ENCODE measurements at regions of chr15 and their contacts with region 1.

Region 1: GRCh38 chr15:41904541-41905005 is 10.7 kb upstream of the SPTBN5 start:
- DNase-seq: peak; percentile 81
- ATAC-seq: peak; percentile 81
- H3K4me3 Mint-ChIP-seq: no peak overlapping the region
- H3K27ac Mint-ChIP-seq: peak overlapping the region; percentile 26
- H3K4me1 Mint-ChIP-seq: peaks cover 22% of the 10 kb centered on the region
- H3K27me3 Mint-ChIP-seq: no peaks in the 10 kb centered on the region

Region 2: GRCh38 chr15:41603941-41604911 is 300.3 kb before region 1 on chr15:
- CTCF ChIA-PET with region 1: interaction called, 11 read pairs
- POLR2A ChIA-PET with region 1: no interaction called
- DNase-seq: peak; percentile 66
- ATAC-seq: peak; percentile 88
- H3K4me3 Mint-ChIP-seq: peak overlapping the region; percentile 32
- H3K27ac Mint-ChIP-seq: no peak overlapping the region
- H3K4me1 Mint-ChIP-seq: peaks cover 9% of the 10 kb centered on the region
- H3K27me3 Mint-ChIP-seq: peaks cover 25% of the 10 kb centered on the region

Region 3: GRCh38 chr15:41695750-41696426 is 208.7 kb before region 1 on chr15:
- CTCF ChIA-PET with region 1: interaction called, 16 read pairs
- POLR2A ChIA-PET with region 1: no interaction called
- DNase-seq: peak; percentile 75
- ATAC-seq: peak; percentile 98
- H3K4me3 Mint-ChIP-seq: peak overlapping the region; percentile 4
- H3K27ac Mint-ChIP-seq: peak overlapping the region; percentile 74
- H3K4me1 Mint-ChIP-seq: peaks cover 38% of the 10 kb centered on the region
- H3K27me3 Mint-ChIP-seq: no peaks in the 10 kb centered on the region

Region 4: GRCh38 chr15:41915255-41915994 is 10.9 kb after region 1 on chr15:
- CTCF ChIA-PET with region 1: interaction called, 18 read pairs
- POLR2A ChIA-PET with region 1: interaction called, 3 read pairs
- DNase-seq: no peak
- ATAC-seq: no peak
- H3K4me3 Mint-ChIP-seq: no peak overlapping the region
- H3K27ac Mint-ChIP-seq: no peak overlapping the region
- H3K4me1 Mint-ChIP-seq: peaks cover 21% of the 10 kb centered on the region
- H3K27me3 Mint-ChIP-seq: no peaks in the 10 kb centered on the region

Region 5: DNA sequence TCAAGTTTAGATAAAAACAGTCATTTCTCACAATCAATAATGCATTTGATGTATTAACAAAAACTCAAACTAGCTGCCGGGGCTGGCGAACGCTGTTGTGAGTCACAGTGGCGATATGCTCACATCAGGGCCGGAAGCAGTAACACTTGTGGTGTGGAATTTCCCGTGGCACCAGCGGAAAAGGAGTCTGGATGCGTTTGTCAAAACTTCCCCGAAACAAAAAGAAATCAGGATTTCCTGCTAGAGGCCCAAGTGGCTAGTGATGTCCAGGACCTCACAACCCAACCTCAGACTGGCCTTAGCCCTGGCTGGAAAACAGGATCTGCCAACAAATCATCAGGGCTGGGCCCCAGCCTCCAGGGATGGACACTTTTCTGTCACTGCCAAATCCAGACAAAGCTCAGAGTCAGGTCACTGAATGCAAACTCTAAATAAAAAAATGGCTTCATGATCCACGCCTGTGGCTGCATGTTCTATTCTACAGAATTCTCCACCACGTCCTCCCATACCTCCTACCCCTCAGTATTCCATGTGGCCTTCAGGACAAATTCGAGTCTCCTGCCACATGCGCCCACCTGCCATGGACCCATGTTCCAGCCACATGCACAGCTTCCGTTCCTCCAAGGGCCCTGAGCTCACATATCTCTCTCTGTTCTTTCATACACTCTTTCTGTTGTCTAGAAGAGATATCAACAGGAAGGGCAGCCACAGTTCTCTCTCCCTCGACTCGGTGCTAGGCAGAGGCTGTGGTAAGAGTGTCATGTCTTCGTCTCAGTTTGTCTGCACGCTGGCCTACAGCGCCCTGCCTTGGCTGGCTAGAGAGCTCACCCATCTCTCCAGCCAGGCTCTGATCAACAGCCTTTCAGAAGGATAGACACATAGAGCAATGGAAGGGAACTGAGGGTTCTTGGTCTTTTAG is 32.3 kb after region 1 on chr15:
- CTCF ChIA-PET with region 1: interaction called, 27 read pairs
- POLR2A ChIA-PET with region 1: no interaction called
- DNase-seq: peak; percentile 83
- ATAC-seq: peak; percentile 85
- H3K4me3 Mint-ChIP-seq: peak overlapping the region; percentile 49
- H3K27ac Mint-ChIP-seq: peak overlapping the region; percentile 95
- H3K4me1 Mint-ChIP-seq: peaks cover 62% of the 10 kb centered on the region
- H3K27me3 Mint-ChIP-seq: no peaks in the 10 kb centered on the region

Measured in activated CD8-positive, alpha-beta T cell treated with anti-CD3 and anti-CD28 coated beads, Interleukin-2, amount 10 ng/mL, durations not matched to agents 7 days and 5 days (primary cell).